Left lung (tissue), 14 donors: ENCODE measurements at regions of chr11 and their contacts with region 1.

Region 1: GRCh38 chr11:6596239-6596877 is 7.1 kb downstream of the RRP8 start:
- DNase-seq: no peak
- ATAC-seq: no peak
- H3K4me3 ChIP-seq: no peak overlapping the region
- H3K27ac ChIP-seq: no peak overlapping the region
- H3K4me1 ChIP-seq: peaks cover 0 to 12% of the 10 kb centered on the region in 2 donors
- H3K27me3 ChIP-seq: no peaks in the 10 kb centered on the region
- CTCF ChIP-seq: no peak

Region 2: GRCh38 chr11:6389921-6390724 is 206.2 kb before region 1 on chr11 and contains the start of gene SMPD1:
- intact Hi-C with region 1: loop called in 1 of 2 experiments (anchors 10 kb)
- DNase-seq: peak; percentile 86 to 99 (median 95)
- ATAC-seq: peak; percentile 98
- H3K4me3 ChIP-seq: peak within 1 kb of the TSS; percentile 74 to 80
- H3K27ac ChIP-seq: peak within 1 kb of the TSS; percentile 89 to 90
- H3K4me1 ChIP-seq: peaks cover 9 to 38% of the 10 kb centered on the region in 2 donors
- H3K27me3 ChIP-seq: no peaks in the 10 kb centered on the region
- CTCF ChIP-seq: no peak
- polyA plus RNA-seq, gene SMPD1: 18.6 to 27.8 (median 22.7) TPM

Region 3: DNA sequence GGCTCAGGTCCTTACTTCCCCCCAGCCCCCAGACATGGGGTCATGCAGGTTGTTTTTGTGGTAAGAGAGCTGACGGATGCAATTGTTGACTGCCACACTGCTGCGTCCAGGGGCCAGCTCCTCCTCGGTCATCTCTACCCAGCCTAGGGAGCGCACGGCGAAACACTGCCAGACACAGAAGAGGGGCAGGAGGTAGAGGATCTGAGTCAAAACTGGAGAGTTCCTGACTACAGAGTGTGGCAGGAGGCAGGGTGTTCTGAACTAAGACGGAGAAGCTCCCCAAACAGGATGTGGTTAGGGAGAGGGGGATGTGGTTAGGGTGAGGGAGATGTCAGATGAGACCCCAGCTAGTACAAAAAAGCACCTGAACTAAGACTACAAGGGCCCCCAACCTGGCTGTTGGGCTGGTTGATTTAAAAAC is 193.8 kb before region 1 on chr11:
- intact Hi-C with region 1: no loop called
- DNase-seq: no peak
- ATAC-seq: no peak
- H3K4me3 ChIP-seq: no peak overlapping the region
- H3K27ac ChIP-seq: no peak overlapping the region
- H3K4me1 ChIP-seq: peaks cover 0 to 6% of the 10 kb centered on the region in 2 donors
- H3K27me3 ChIP-seq: no peaks in the 10 kb centered on the region
- CTCF ChIP-seq: no peak

Region 4: DNA sequence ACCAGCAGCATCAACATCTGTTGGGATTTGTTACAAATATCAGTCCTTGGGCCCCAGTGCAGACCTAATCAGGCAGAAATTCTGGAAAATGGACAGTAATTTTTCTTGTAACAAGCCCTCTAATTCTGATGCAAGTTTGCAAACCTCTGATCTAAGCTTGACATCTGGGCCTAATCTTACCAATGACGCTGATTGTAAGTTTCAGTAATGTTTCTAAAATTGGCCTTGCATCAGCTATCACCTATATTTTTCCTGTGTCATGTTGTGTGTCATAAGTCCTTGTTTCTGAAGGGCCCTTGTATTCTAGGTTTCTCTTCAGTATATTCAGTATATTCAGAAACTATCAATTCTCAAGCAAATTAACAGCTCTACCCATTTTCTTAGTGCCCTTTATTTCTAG is 366.3 kb after region 1 on chr11:
- intact Hi-C with region 1: no loop called
- DNase-seq: no peak
- ATAC-seq: no peak
- H3K4me3 ChIP-seq: no peak overlapping the region
- H3K27ac ChIP-seq: no peak overlapping the region
- H3K4me1 ChIP-seq: no peaks in the 10 kb centered on the region
- H3K27me3 ChIP-seq: no peaks in the 10 kb centered on the region
- CTCF ChIP-seq: no peak